A549 (cell line): ENCODE measurements at regions of chr1 and their contacts with region 1.

Region 1: DNA sequence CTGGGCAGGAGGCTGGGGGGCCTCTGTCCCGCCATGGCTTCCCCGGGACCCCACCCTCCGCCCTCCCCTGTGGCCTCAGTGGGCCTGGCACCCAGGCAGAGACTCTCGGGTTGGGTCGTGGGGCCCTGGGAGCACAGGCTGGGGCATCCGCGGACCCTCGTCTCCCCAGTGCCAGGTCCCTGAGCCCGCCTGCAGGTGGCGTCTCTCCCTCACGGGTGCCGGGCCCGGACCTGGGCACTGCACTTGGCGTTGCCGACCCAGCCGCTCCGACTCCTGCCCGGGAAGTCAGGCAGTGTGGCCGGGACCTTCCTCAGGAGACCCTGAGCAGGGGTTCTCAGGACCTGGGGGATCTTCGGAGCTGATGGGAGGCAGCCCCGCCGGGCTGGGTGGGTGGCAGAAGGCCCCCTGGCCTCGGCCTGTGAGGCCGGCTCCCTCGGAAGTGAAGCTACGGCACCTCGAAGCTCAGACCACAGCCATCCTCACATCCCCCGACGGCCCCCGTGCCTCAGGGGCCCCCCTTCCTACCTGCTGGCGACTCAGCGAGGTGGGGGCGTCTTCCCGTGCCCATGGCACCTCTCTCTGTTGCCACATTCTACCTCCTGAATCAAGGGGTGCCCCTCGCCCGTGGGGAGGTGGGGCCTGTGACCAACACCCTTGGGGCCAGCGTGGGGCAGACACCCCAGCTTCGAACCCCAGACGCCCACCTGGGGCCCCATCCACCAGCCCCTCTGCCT is 6.4 kb upstream of the C1orf159 start:
- DNase-seq: peak; percentile 58 to 76
- ATAC-seq: peak; percentile 90 to 95
- H3K4me3 ChIP-seq: no peak overlapping the region
- H3K27ac ChIP-seq: peak overlapping the region in 1 of 2 experiments; percentile 67; a peak in 3 of 6 replicates
- H3K4me1 ChIP-seq: peaks cover 4% of the 10 kb centered on the region; the same call in 1 of the 3 replicates
- CTCF ChIP-seq: peak; percentile 79
- EP300 ChIP-seq: no peak
- POLR2A ChIP-seq: no peak
- RAD21 ChIP-seq: peak; percentile 86 to 93

Region 2: DNA sequence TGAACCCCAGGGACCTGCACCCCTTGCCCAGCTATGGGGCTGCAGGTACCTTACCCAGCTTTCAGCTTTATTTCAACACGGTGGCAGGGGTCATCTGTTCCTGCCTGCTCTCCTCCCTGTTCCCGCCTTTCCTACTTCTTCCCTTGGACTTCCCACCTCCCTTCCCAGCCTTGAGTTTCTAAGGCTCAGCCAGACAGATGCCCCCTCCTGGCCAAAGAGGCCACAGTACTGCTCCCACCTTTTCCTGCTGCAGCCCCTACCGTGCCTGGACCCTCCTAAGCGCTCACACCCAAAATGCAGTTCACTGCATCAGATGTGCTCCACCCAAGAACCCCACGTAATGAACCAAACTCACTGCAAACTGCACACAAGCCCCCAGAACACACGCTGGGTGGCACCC is 170.9 kb before region 1 on chr1:
- CTCF ChIA-PET with region 1: no interaction called
- POLR2A ChIA-PET with region 1: no interaction called
- DNase-seq: peak in 1 of 2 experiments; percentile 46
- ATAC-seq: peak in 1 of 2 experiments; percentile 70; a peak in 3 of 6 replicates
- H3K4me3 ChIP-seq: no peak overlapping the region
- H3K27ac ChIP-seq: no peak overlapping the region
- H3K4me1 ChIP-seq: no peaks in the 10 kb centered on the region
- CTCF ChIP-seq: peak; percentile 18; the same call in 1 of the 3 replicates
- EP300 ChIP-seq: no peak
- POLR2A ChIP-seq: no peak
- RAD21 ChIP-seq: no peak

Region 3: DNA sequence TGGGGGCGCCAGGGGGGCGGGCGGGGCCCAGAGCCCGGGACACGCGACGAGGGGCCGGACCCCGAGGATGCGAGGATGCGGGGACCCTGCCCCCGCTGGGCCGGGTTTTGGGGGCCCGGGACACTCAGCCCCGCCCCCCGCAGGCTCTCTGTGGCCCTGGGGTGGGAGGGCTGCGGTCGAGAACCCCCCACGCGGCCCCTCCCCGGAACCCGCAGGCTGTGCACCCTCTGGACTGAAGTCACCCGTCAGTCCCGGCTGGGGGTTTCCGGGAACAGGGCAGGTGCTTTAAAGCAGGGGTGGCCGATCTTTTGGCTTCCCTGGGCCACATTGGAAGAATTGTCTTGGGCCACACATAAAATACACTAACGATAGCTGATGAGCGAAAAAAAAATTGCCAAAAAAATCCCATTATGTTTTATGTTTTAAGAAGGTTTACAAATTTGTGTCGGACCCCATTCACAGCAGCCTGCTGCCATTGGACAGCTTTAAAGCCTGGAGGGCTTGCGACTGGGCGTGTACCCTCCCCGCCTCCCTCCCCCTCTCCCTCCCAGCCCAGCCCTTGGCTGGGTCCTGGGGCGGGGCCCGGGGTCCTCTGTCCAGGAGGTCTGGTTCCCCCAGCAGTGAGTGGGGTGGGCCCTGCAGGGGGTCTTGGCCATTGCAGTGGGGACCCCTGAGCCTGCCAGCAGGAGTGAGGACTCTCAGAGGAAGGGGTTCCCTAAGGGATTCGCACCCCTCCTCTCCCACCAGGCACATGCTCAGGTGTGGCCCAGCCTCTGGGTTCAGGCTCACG is 15.2 kb after region 1 on chr1:
- CTCF ChIA-PET with region 1: interaction called, 11 read pairs
- POLR2A ChIA-PET with region 1: no interaction called
- DNase-seq: no peak
- ATAC-seq: peak in 1 of 2 experiments; percentile 17; a peak in 1 of 6 replicates
- H3K4me3 ChIP-seq: no peak overlapping the region
- H3K27ac ChIP-seq: no peak overlapping the region
- H3K4me1 ChIP-seq: no peaks in the 10 kb centered on the region
- CTCF ChIP-seq: no peak
- EP300 ChIP-seq: no peak
- POLR2A ChIP-seq: no peak
- RAD21 ChIP-seq: no peak

Region 4: GRCh38 chr1:1157914-1158710 is 35.9 kb after region 1 on chr1:
- CTCF ChIA-PET with region 1: interaction called, 12 read pairs
- POLR2A ChIA-PET with region 1: no interaction called
- DNase-seq: no peak
- ATAC-seq: peak; percentile 63 to 65; a peak in 5 of 6 replicates
- H3K4me3 ChIP-seq: peak overlapping the region; percentile 54
- H3K27ac ChIP-seq: peak overlapping the region; percentile 95
- H3K4me1 ChIP-seq: peaks cover 12% of the 10 kb centered on the region
- CTCF ChIP-seq: no peak
- EP300 ChIP-seq: no peak
- POLR2A ChIP-seq: no peak
- RAD21 ChIP-seq: no peak

Region 5: GRCh38 chr1:1225238-1225845 is 103.1 kb after region 1 on chr1:
- CTCF ChIA-PET with region 1: interaction called, 31 read pairs
- POLR2A ChIA-PET with region 1: no interaction called
- DNase-seq: no peak
- ATAC-seq: no peak
- H3K4me3 ChIP-seq: no peak overlapping the region
- H3K27ac ChIP-seq: no peak overlapping the region
- H3K4me1 ChIP-seq: peaks cover 4% of the 10 kb centered on the region; the same call in 1 of the 3 replicates
- CTCF ChIP-seq: no peak
- EP300 ChIP-seq: no peak
- POLR2A ChIP-seq: no peak
- RAD21 ChIP-seq: no peak

Region 6: GRCh38 chr1:1237874-1238701 is 115.8 kb after region 1 on chr1:
- CTCF ChIA-PET with region 1: interaction called, 46 read pairs
- POLR2A ChIA-PET with region 1: no interaction called
- DNase-seq: no peak
- ATAC-seq: peak in 1 of 2 experiments; percentile 13; a peak in 3 of 6 replicates
- H3K4me3 ChIP-seq: no peak overlapping the region
- H3K27ac ChIP-seq: peak overlapping the region in 1 of 2 experiments; percentile 55; a peak in 1 of 6 replicates
- H3K4me1 ChIP-seq: peaks cover 30% of the 10 kb centered on the region
- CTCF ChIP-seq: no peak
- EP300 ChIP-seq: no peak
- POLR2A ChIP-seq: 0 out of 2 replicates have a peak, but pooled peaks have one; percentile 2
- RAD21 ChIP-seq: no peak

Region 7: GRCh38 chr1:1264868-1265272 is 142.6 kb after region 1 on chr1:
- CTCF ChIA-PET with region 1: interaction called, 17 read pairs
- POLR2A ChIA-PET with region 1: no interaction called
- DNase-seq: no peak
- ATAC-seq: peak; percentile 51 to 64; a peak in 4 of 6 replicates
- H3K4me3 ChIP-seq: no peak overlapping the region
- H3K27ac ChIP-seq: no peak overlapping the region
- H3K4me1 ChIP-seq: no peaks in the 10 kb centered on the region
- CTCF ChIP-seq: no peak
- EP300 ChIP-seq: no peak
- POLR2A ChIP-seq: no peak
- RAD21 ChIP-seq: no peak

Region 8: DNA sequence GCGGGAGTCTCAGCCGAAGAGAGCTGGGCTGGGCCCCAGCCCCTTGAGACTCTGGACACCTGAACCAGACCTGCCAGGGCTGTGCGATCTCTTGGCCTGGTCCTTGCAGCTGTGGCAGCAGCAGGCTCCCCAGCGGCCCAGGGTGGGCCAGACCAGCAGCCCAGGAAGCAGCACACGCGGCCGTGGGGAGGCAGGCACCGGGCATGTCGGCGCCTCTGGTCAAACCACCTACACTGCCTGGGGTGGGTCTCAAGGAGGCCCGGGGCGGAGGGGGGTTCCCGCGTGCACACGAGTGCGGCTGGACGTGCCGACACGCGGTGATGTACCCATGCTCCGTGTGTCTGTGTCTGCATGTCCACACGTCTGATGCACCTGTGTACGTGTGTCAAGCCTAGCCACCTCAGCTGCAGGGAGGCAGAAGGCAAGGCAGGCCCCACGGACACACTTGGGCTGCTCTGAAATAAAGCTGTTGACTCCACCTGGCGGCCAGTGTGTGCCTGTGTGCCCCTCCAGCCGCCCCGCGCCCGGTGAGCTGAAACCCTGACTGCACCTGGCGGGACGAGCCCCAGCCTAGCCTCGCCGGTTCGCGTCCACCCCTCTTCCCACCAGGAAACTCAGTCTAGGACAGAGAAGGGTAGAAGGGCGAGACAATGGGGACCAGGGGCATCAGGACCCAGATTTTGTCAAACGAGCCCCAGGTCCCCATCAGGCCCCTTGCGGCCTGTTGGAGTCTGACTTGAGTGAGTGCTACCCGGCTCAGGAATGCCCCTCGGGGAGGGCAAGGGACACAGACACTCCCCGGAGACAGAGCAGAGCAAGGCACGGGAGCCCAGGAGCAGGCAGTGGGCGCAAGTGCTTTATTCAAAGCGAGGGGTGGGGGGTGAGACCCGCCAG is 169.6 kb after region 1 on chr1:
- CTCF ChIA-PET with region 1: interaction called, 72 read pairs
- POLR2A ChIA-PET with region 1: no interaction called
- DNase-seq: peak in 1 of 2 experiments; percentile 69
- ATAC-seq: peak; percentile 62 to 89; a peak in 5 of 6 replicates
- H3K4me3 ChIP-seq: no peak overlapping the region
- H3K27ac ChIP-seq: no peak overlapping the region
- H3K4me1 ChIP-seq: no peaks in the 10 kb centered on the region
- CTCF ChIP-seq: peak; percentile 37
- EP300 ChIP-seq: no peak
- POLR2A ChIP-seq: no peak
- RAD21 ChIP-seq: peak; percentile 57 to 58